ENCODE measurements at regions of chr3 and their contacts with region 1.

Region 1: GRCh38 chr3:48507351-48508061 is 3.5 kb upstream of the SHISA5 start:
- DNase-seq: peak; percentile 83
- ATAC-seq: peak; percentile 87
- H3K4me3 ChIP-seq: no peak overlapping the region
- H3K4me3 Mint-ChIP-seq: peak overlapping the region; percentile 32
- H3K27ac ChIP-seq: no peak overlapping the region
- H3K27ac Mint-ChIP-seq: peak overlapping the region; percentile 65
- H3K4me1 ChIP-seq: peaks cover 14 to 25% of the 10 kb centered on the region in 2 donors
- H3K4me1 Mint-ChIP-seq: peaks cover 23% of the 10 kb centered on the region
- H3K27me3 ChIP-seq: peaks cover 0 to 2% (median 0%) of the 10 kb centered on the region in 4 experiments
- H3K27me3 Mint-ChIP-seq: peaks cover 3% of the 10 kb centered on the region
- CTCF ChIP-seq: peak; percentile 84

Region 2: DNA sequence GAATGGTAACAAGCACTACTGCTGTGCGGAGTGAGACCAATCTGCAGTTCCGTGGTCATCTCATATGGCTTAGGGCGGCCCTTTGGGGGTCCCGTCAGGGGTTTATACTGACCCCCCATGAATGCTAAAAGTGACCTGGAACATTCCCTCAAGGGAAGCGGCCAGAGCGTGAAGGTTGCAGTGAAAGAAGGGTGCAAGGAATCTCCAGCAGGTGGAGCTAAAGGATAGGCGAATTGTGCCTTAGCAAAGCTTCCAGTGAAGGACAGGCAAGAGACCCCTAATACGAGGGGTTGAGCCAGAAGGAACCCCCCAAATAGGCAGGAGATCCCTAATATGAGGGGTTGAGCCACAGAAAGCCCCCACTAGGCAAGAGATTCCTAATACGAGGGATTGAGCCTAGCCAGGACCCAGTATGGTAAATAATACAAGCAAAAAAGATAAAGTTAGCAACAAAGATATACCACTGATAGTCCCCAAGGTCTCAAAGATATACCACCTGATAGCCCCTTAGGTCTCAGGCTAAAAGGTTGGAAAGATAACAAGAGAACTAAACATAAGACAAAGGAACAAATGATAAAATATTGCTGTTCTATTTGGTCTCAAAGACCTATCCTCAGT is 233.8 kb before region 1 on chr3:
- CTCF ChIA-PET with region 1: interaction called, 19 read pairs
- POLR2A ChIA-PET with region 1: no interaction called
- intact Hi-C with region 1: no loop called
- DNase-seq: peak; percentile 78
- ATAC-seq: peak; percentile 63
- H3K4me3 ChIP-seq: no peak overlapping the region
- H3K4me3 Mint-ChIP-seq: no peak overlapping the region
- H3K27ac ChIP-seq: no peak overlapping the region
- H3K27ac Mint-ChIP-seq: no peak overlapping the region
- H3K4me1 ChIP-seq: no peaks in the 10 kb centered on the region
- H3K4me1 Mint-ChIP-seq: no peaks in the 10 kb centered on the region
- H3K27me3 ChIP-seq: no peaks in the 10 kb centered on the region
- H3K27me3 Mint-ChIP-seq: no peaks in the 10 kb centered on the region
- CTCF ChIP-seq: peak; percentile 79

Region 3: GRCh38 chr3:48446425-48447193 is 60.9 kb before region 1 on chr3 and contains the start of gene ATRIP:
- CTCF ChIA-PET with region 1: interaction called, 21 read pairs
- POLR2A ChIA-PET with region 1: no interaction called
- intact Hi-C with region 1: loop called (anchors 1 kb)
- DNase-seq: peak; percentile 89
- ATAC-seq: peak; percentile 99
- H3K4me3 ChIP-seq: peak within 1 kb of the TSS; percentile 50 to 82 (median 73)
- H3K4me3 Mint-ChIP-seq: peak within 1 kb of the TSS; percentile 91
- H3K27ac ChIP-seq: peak within 1 kb of the TSS; percentile 37 to 69
- H3K27ac Mint-ChIP-seq: peak within 1 kb of the TSS; percentile 91
- H3K4me1 ChIP-seq: peaks cover 20 to 27% of the 10 kb centered on the region in 2 donors
- H3K4me1 Mint-ChIP-seq: peaks cover 37% of the 10 kb centered on the region
- H3K27me3 ChIP-seq: no peaks in the 10 kb centered on the region
- H3K27me3 Mint-ChIP-seq: no peaks in the 10 kb centered on the region
- CTCF ChIP-seq: no peak
- total RNA-seq, gene ATRIP: 11.6 and 14.3 TPM in 2 replicates

Region 4: GRCh38 chr3:48478596-48479555 is 28.6 kb before region 1 on chr3:
- CTCF ChIA-PET with region 1: interaction called, 240 read pairs
- POLR2A ChIA-PET with region 1: interaction called, 5 read pairs
- intact Hi-C with region 1: loop called (anchors 1 kb)
- DNase-seq: peak; percentile 72
- ATAC-seq: peak; percentile 78
- H3K4me3 ChIP-seq: peak overlapping the region in 4 of 5 experiments; percentile 37 to 52 (median 44)
- H3K4me3 Mint-ChIP-seq: peak overlapping the region; percentile 86
- H3K27ac ChIP-seq: peak overlapping the region; percentile 85 to 89
- H3K27ac Mint-ChIP-seq: peak overlapping the region; percentile 99
- H3K4me1 ChIP-seq: peaks cover 38 to 45% of the 10 kb centered on the region in 2 donors
- H3K4me1 Mint-ChIP-seq: peaks cover 45% of the 10 kb centered on the region
- H3K27me3 ChIP-seq: no peaks in the 10 kb centered on the region
- H3K27me3 Mint-ChIP-seq: no peaks in the 10 kb centered on the region
- CTCF ChIP-seq: no peak

Measured in B cell (primary cell).